Mammary epithelial cell (primary cell): ENCODE measurements at regions of chrX and their contacts with region 1.

Region 1: GRCh38 chrX:123603491-123603890 is 129.4 kb downstream of the THOC2 start:
- DNase-seq: no peak
- H3K4me3 ChIP-seq: no peak overlapping the region
- H3K27ac ChIP-seq: no peak overlapping the region
- H3K4me1 ChIP-seq: no peaks in the 10 kb centered on the region
- H3K27me3 ChIP-seq: no peaks in the 10 kb centered on the region
- CTCF ChIP-seq: no peak

Region 2: GRCh38 chrX:123184219-123184857 is 419.2 kb before region 1 on chrX and contains the start of gene GRIA3:
- CTCF ChIA-PET with region 1: interaction called, 19 read pairs
- dilution Hi-C with region 1: no loop called
- in situ Hi-C with region 1: no loop called
- intact Hi-C with region 1: no loop called
- DNase-seq: no peak
- H3K4me3 ChIP-seq: peak within 1 kb of the TSS in 2 of 3 experiments; percentile 28 to 30
- H3K27ac ChIP-seq: no peak within 1 kb of the TSS
- H3K4me1 ChIP-seq: no peaks in the 10 kb centered on the region
- H3K27me3 ChIP-seq: peaks cover 9% of the 10 kb centered on the region
- CTCF ChIP-seq: no peak
- total RNA-seq, gene GRIA3: 0.73 to 0.83 TPM

Region 3: DNA sequence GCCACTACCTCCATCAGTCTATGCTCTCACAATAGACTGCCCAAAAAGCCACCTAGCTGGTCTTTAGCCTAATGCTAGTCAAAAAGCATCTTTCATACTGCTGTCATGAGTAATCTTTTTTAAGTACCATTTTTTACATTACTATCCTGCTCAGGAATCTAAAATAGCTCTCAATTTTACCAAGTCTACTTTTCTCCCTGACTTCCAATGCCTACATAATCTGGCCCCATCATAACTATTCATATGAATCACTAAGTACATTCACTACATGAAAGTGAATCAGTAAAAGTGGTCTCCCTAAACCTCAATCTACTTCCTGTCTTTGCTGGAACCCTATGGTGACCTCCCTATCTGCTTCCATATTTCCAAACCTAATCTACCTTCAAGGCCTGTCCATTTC is 23.5 kb after region 1 on chrX:
- CTCF ChIA-PET with region 1: no interaction called
- dilution Hi-C with region 1: no loop called
- in situ Hi-C with region 1: no loop called
- intact Hi-C with region 1: no loop called
- DNase-seq: peak; percentile 14
- H3K4me3 ChIP-seq: no peak overlapping the region
- H3K27ac ChIP-seq: no peak overlapping the region
- H3K4me1 ChIP-seq: no peaks in the 10 kb centered on the region
- H3K27me3 ChIP-seq: no peaks in the 10 kb centered on the region
- CTCF ChIP-seq: no peak